ENCODE measurements at regions of chr7 and their contacts with region 1.

Region 1: GRCh38 chr7:44638611-44639557 is 32.5 kb downstream of the OGDH start:
- DNase-seq: peak; percentile 95
- H3K4me3 Mint-ChIP-seq: peak overlapping the region; percentile 82
- H3K27ac Mint-ChIP-seq: peak overlapping the region; percentile 99
- H3K4me1 Mint-ChIP-seq: peaks cover 66% of the 10 kb centered on the region
- H3K27me3 Mint-ChIP-seq: no peaks in the 10 kb centered on the region

Region 2: GRCh38 chr7:44617225-44617890 is 21.5 kb before region 1 on chr7:
- intact Hi-C with region 1: loop called (anchors 1 kb)
- DNase-seq: no peak
- H3K4me3 Mint-ChIP-seq: peak overlapping the region; percentile 70
- H3K27ac Mint-ChIP-seq: peak overlapping the region; percentile 92
- H3K4me1 Mint-ChIP-seq: peaks cover 62% of the 10 kb centered on the region
- H3K27me3 Mint-ChIP-seq: no peaks in the 10 kb centered on the region

Region 3: GRCh38 chr7:44735403-44736165 is 96.7 kb after region 1 on chr7:
- intact Hi-C with region 1: loop called (anchors 1 kb)
- DNase-seq: peak; percentile 81
- H3K4me3 Mint-ChIP-seq: peak overlapping the region; percentile 46
- H3K27ac Mint-ChIP-seq: peak overlapping the region; percentile 89
- H3K4me1 Mint-ChIP-seq: peaks cover 19% of the 10 kb centered on the region
- H3K27me3 Mint-ChIP-seq: no peaks in the 10 kb centered on the region

Region 4: DNA sequence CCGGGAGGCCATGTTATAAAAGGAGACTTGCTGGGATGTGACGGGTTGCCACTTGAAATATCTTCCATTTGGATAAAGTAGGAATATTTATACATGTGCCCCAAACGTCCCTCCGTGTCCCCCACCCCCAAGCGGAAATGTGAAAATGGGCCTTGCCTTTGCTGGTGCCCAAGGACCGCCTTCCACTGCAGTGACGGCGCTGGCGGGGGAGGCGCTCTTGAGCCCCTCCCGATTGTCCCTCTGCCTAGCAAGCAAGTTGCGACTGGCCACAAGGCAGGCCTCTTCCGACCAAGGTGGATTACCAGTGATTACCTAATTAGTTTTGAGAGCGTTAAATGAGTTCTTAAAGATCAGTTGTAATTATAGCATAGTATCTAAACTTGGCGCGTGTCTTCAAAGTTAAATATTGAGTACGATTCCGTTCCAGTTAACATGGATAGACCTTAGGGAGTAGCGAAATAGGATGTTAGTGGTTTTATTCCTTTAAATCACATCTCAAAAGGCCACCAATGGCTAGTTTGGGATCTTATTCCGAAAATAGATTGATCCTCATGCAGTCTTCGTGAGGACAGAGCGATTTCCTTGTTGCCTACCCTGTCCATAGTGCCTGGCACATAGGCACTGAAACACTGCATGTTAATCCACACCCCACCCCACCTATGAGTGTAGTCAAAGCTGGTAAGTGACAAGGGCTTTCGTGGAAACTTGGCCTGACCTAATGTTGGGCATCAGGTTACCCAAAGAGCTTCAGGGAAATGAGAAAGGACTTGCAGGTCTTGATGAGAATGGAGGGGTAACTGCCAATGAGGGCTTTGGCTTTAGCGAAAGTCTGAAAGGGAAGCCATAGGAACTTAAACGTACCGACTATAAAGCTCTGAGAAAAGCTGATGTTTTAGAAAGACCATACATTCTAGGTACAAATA is 158.7 kb after region 1 on chr7:
- intact Hi-C with region 1: loop called (anchors 1 kb)
- DNase-seq: peak; percentile 95
- H3K4me3 Mint-ChIP-seq: peak overlapping the region; percentile 98
- H3K27ac Mint-ChIP-seq: peak overlapping the region; percentile 97
- H3K4me1 Mint-ChIP-seq: peaks cover 31% of the 10 kb centered on the region
- H3K27me3 Mint-ChIP-seq: no peaks in the 10 kb centered on the region

Region 5: GRCh38 chr7:45196374-45196773 is 557.5 kb after region 1 on chr7:
- intact Hi-C with region 1: loop called (anchors 1 kb)
- DNase-seq: peak; percentile 72
- H3K4me3 Mint-ChIP-seq: peak overlapping the region; percentile 18
- H3K27ac Mint-ChIP-seq: peak overlapping the region; percentile 82
- H3K4me1 Mint-ChIP-seq: peaks cover 30% of the 10 kb centered on the region
- H3K27me3 Mint-ChIP-seq: peaks cover 19% of the 10 kb centered on the region